GM12878 (cell line): ENCODE measurements at regions of chr9 and their contacts with region 1.

Region 1: GRCh38 chr9:73183917-73184861 is 32.5 kb downstream of the ANXA1 start:
- DNase-seq: no peak
- ATAC-seq: peak; percentile 51; the same call in 1 of the 3 replicates
- H3K4me3 ChIP-seq: no peak overlapping the region
- H3K27ac ChIP-seq: no peak overlapping the region
- H3K4me1 ChIP-seq: peaks cover 4% of the 10 kb centered on the region; the same call in 1 of the 2 replicates
- H3K27me3 ChIP-seq: no peaks in the 10 kb centered on the region
- CTCF ChIP-seq: peak in 2 of 3 experiments; percentile 9 to 15; a peak in 3 of 6 replicates
- EP300 ChIP-seq: no peak
- POLR2A ChIP-seq: no peak
- RAD21 ChIP-seq: peak; percentile 79

Region 2: GRCh38 chr9:72856972-72857623 is 327.1 kb before region 1 on chr9:
- CTCF ChIA-PET with region 1: interaction called, 4 read pairs
- POLR2A ChIA-PET with region 1: no interaction called
- RAD21 ChIA-PET with region 1: no interaction called
- SMC1A ChIA-PET with region 1: interaction called, 3 read pairs
- in situ Hi-C with region 1: loop called (anchors 10 kb)
- intact Hi-C with region 1: loop called (anchors 5 kb)
- DNase-seq: no peak
- ATAC-seq: peak; percentile 74
- H3K4me3 ChIP-seq: no peak overlapping the region
- H3K27ac ChIP-seq: no peak overlapping the region
- H3K4me1 ChIP-seq: no peaks in the 10 kb centered on the region
- H3K27me3 ChIP-seq: no peaks in the 10 kb centered on the region
- CTCF ChIP-seq: peak; percentile 43 to 55 (median 44); a peak in 5 of 6 replicates
- EP300 ChIP-seq: no peak
- POLR2A ChIP-seq: no peak
- RAD21 ChIP-seq: peak; percentile 44; the same call in 1 of the 2 replicates

Region 3: DNA sequence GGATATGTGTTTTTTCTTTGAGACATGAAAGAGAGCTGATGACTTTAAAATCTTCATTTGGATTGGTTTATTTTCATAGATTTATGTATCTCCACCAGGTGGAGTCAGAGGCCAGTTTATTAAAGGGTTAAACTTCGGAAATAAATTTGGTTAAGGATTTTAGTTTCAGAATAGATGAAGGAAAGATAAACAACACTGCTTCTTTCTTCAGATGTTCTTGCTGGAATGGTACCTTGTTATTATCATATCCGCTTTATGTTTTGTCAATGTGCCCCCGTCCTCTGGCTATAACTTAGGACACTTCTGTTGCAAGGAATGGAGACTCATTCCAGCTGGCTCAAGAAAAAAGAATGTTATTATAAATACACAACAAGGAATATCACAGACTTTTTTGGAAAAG is 312.5 kb before region 1 on chr9:
- CTCF ChIA-PET with region 1: interaction called, 3 read pairs
- POLR2A ChIA-PET with region 1: no interaction called
- RAD21 ChIA-PET with region 1: interaction called, 3 read pairs
- SMC1A ChIA-PET with region 1: no interaction called
- in situ Hi-C with region 1: no loop called
- intact Hi-C with region 1: loop called (anchors 5 kb)
- DNase-seq: no peak
- ATAC-seq: no peak
- H3K4me3 ChIP-seq: no peak overlapping the region
- H3K27ac ChIP-seq: no peak overlapping the region
- H3K4me1 ChIP-seq: no peaks in the 10 kb centered on the region
- H3K27me3 ChIP-seq: no peaks in the 10 kb centered on the region; a peak in 1 of 4 replicates
- CTCF ChIP-seq: peak in 2 of 3 experiments; percentile 14 to 36; a peak in 1 of 6 replicates
- EP300 ChIP-seq: no peak
- POLR2A ChIP-seq: no peak
- RAD21 ChIP-seq: peak; percentile 50

Region 4: DNA sequence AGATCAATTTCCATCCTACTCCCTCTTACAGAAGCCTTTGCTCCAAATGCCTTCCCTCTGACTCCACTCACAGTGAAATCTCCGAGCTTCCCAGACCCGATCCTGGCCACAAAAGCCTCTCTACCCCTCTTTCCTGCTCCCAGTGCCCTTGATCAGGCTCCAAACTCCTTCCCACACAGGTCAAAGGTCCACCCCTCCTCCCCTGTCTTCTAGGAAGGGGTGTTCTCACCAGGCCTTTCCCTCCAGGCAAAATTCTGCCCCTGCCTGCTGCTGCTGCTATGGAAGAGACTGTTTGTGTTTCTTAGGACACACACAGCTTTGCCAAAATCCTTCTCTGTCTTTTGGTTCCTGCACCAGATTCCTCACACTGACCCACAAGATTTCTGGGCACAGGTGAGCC is 145.6 kb before region 1 on chr9:
- CTCF ChIA-PET with region 1: interaction called, 3 read pairs
- POLR2A ChIA-PET with region 1: no interaction called
- RAD21 ChIA-PET with region 1: no interaction called
- SMC1A ChIA-PET with region 1: interaction called, 4 read pairs
- in situ Hi-C with region 1: no loop called
- intact Hi-C with region 1: loop called (anchors 10 kb)
- DNase-seq: no peak
- ATAC-seq: no peak
- H3K4me3 ChIP-seq: no peak overlapping the region
- H3K27ac ChIP-seq: no peak overlapping the region
- H3K4me1 ChIP-seq: no peaks in the 10 kb centered on the region
- H3K27me3 ChIP-seq: no peaks in the 10 kb centered on the region
- CTCF ChIP-seq: no peak
- EP300 ChIP-seq: no peak
- POLR2A ChIP-seq: no peak
- RAD21 ChIP-seq: no peak

Region 5: DNA sequence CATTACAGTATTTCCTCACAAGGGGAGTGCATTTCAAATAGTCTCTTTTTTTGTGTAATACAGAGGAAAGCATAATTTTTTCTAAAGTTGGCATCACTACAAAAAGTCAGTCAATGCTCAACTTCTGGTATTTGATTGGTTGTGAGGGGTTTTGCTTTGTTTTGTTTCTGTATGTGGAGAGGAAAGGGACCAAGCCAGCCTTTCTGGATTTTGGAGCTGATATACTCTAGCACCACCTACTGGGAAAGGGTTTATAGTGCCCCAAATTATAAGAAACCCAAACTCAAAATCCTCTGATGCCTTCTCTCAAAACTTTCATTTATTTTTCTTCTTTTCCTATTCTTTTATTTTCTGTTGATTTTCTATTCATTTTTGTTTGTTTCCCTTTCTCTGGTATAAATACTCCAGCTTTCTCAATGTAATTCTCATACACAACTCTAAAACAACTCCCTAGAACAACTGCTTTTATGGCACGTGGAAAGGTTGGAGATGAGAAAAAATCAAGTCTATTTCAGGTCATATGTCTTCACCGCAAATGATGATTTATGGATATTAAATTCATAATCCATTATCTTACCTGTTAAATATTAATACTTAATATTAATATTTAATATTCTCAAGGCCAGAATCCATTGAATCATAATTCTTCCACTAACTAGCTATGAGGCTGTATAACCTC is 102.1 kb before region 1 on chr9:
- CTCF ChIA-PET with region 1: interaction called, 21 read pairs
- POLR2A ChIA-PET with region 1: no interaction called
- RAD21 ChIA-PET with region 1: no interaction called
- SMC1A ChIA-PET with region 1: interaction called, 4 read pairs
- in situ Hi-C with region 1: no loop called
- intact Hi-C with region 1: no loop called
- DNase-seq: no peak
- ATAC-seq: peak; percentile 69
- H3K4me3 ChIP-seq: no peak overlapping the region
- H3K27ac ChIP-seq: no peak overlapping the region
- H3K4me1 ChIP-seq: no peaks in the 10 kb centered on the region
- H3K27me3 ChIP-seq: no peaks in the 10 kb centered on the region
- CTCF ChIP-seq: peak; percentile 64 to 76 (median 67)
- EP300 ChIP-seq: no peak
- POLR2A ChIP-seq: no peak
- RAD21 ChIP-seq: peak; percentile 75

Region 6: GRCh38 chr9:73104342-73104741 is 79.8 kb before region 1 on chr9:
- CTCF ChIA-PET with region 1: interaction called, 174 read pairs
- POLR2A ChIA-PET with region 1: no interaction called
- RAD21 ChIA-PET with region 1: interaction called, 108 read pairs
- SMC1A ChIA-PET with region 1: interaction called, 46 read pairs
- in situ Hi-C with region 1: loop called (anchors 5 kb)
- intact Hi-C with region 1: loop called (anchors 1 kb)
- DNase-seq: no peak
- ATAC-seq: no peak
- H3K4me3 ChIP-seq: no peak overlapping the region
- H3K27ac ChIP-seq: no peak overlapping the region
- H3K4me1 ChIP-seq: no peaks in the 10 kb centered on the region
- H3K27me3 ChIP-seq: no peaks in the 10 kb centered on the region
- CTCF ChIP-seq: no peak
- EP300 ChIP-seq: no peak
- POLR2A ChIP-seq: no peak
- RAD21 ChIP-seq: no peak

Region 7: DNA sequence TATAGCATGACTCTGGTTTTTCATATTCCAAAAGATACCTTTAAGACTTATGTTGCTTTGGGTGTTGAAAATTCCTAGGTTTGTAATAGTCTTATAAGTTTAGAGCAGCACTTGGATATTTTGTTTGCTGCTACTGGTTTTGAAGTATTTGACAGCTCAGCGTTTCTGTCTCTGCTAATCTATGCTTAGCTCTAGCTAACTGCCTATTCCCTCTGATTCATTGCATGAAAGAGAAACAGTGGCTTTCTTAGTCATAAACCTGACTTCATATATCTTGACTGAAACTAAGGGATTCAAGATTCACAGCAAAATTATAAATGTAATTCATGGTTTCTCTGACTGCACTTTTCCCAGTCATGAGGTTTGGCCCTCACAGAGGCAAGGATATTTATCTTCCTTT is 68.2 kb before region 1 on chr9:
- CTCF ChIA-PET with region 1: interaction called, 174 read pairs
- POLR2A ChIA-PET with region 1: no interaction called
- RAD21 ChIA-PET with region 1: interaction called, 108 read pairs
- SMC1A ChIA-PET with region 1: interaction called, 13 read pairs
- in situ Hi-C with region 1: no loop called
- intact Hi-C with region 1: no loop called
- DNase-seq: no peak
- ATAC-seq: peak; percentile 48; the same call in 1 of the 3 replicates
- H3K4me3 ChIP-seq: no peak overlapping the region
- H3K27ac ChIP-seq: no peak overlapping the region
- H3K4me1 ChIP-seq: no peaks in the 10 kb centered on the region
- H3K27me3 ChIP-seq: no peaks in the 10 kb centered on the region
- CTCF ChIP-seq: no peak
- EP300 ChIP-seq: no peak
- POLR2A ChIP-seq: no peak
- RAD21 ChIP-seq: no peak

Region 8: DNA sequence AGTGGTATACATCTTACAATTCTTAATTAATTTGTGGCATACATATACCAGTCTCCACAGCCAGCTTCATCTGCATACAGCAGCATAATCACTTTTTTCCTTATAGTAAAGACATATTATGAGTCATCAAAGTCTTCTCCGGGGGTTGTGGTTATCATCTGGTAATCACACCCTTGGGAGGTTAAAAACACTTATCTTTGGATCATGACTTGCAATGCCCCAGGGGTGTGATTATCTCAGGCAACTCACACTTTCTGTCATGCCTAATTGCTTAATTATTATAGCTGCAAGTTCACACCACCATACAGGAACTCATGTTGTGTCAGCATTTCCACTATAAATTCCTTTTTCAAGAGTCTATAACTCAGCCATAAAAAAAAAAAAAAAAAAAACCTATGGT is 185.9 kb after region 1 on chr9:
- CTCF ChIA-PET with region 1: no interaction called
- POLR2A ChIA-PET with region 1: no interaction called
- RAD21 ChIA-PET with region 1: no interaction called
- SMC1A ChIA-PET with region 1: no interaction called
- in situ Hi-C with region 1: no loop called
- intact Hi-C with region 1: no loop called
- DNase-seq: no peak
- ATAC-seq: no peak; the same call in 2 of the 3 replicates
- H3K4me3 ChIP-seq: no peak overlapping the region
- H3K27ac ChIP-seq: no peak overlapping the region
- H3K4me1 ChIP-seq: no peaks in the 10 kb centered on the region
- H3K27me3 ChIP-seq: no peaks in the 10 kb centered on the region
- CTCF ChIP-seq: no peak
- EP300 ChIP-seq: no peak
- POLR2A ChIP-seq: no peak
- RAD21 ChIP-seq: no peak

Region 9: GRCh38 chr9:73683862-73684591 is 499.8 kb after region 1 on chr9:
- CTCF ChIA-PET with region 1: no interaction called
- POLR2A ChIA-PET with region 1: no interaction called
- RAD21 ChIA-PET with region 1: no interaction called
- SMC1A ChIA-PET with region 1: no interaction called
- in situ Hi-C with region 1: no loop called
- intact Hi-C with region 1: no loop called
- DNase-seq: no peak
- ATAC-seq: peak; percentile 87
- H3K4me3 ChIP-seq: no peak overlapping the region
- H3K27ac ChIP-seq: no peak overlapping the region
- H3K4me1 ChIP-seq: no peaks in the 10 kb centered on the region
- H3K27me3 ChIP-seq: no peaks in the 10 kb centered on the region
- CTCF ChIP-seq: peak; percentile 47 to 67 (median 53); a peak in 5 of 6 replicates
- EP300 ChIP-seq: no peak
- POLR2A ChIP-seq: no peak
- RAD21 ChIP-seq: peak; percentile 88